ENCODE measurements at regions of chr22 and their contacts with region 1.

Region 1: GRCh38 chr22:37608477-37609239 is at the start of gene GGA1:
- DNase-seq: peak; percentile 99
- ATAC-seq: peak; percentile 75
- H3K4me3 ChIP-seq: peak within 1 kb of the TSS; percentile 65 to 89 (median 77)
- H3K4me3 Mint-ChIP-seq: peak within 1 kb of the TSS; percentile 96
- H3K27ac ChIP-seq: peak within 1 kb of the TSS; percentile 94 to 99
- H3K27ac Mint-ChIP-seq: peak within 1 kb of the TSS; percentile 98
- H3K4me1 ChIP-seq: peaks cover 26 to 36% of the 10 kb centered on the region in 2 donors
- H3K4me1 Mint-ChIP-seq: peaks cover 33% of the 10 kb centered on the region
- H3K27me3 ChIP-seq: peaks cover 0 to 2% (median 0%) of the 10 kb centered on the region in 4 experiments
- H3K27me3 Mint-ChIP-seq: peaks cover 10% of the 10 kb centered on the region
- CTCF ChIP-seq: no peak
- total RNA-seq, gene GGA1: 146 and 154 TPM in 2 replicates

Region 2: DNA sequence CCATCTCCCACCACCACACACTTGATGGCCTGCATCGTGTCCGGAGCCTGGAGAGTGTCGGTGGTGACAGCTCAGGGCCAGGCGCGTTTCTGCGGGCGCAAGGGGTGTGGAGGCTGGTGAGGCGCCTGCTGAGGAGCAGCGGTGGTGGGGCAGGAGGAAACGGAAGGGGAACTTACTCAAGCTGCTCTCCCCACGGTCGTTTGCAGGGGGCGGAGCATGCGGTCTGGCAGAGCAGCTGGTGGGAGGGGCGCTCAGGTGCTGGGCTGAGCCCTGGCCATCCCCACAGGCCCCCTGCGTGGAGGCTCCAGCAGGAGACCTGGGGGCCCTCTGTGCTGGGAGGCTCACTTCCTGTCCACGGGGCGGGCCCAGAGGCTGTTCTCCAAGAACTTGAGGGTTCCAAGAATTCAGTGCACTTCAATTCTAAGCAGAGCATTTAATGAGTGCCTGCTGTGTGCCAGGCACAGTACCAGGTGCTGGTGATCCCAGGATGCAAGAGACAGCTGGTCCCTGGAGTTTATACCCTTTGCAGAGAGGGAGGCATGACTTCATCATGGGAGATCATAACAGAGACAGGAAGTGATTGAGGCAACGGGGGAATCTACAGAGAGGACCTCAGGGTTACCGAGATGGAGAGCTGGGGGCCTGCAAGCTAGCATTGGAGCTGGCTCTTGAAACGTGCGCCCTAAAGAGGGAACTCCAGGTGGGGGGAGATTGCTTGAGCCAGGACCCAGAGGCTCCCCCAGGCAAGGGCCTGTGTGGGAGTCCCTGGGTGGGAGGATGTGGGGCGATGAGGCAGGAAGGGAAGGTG is 364.3 kb before region 1 on chr22 and contains the start of gene RAC2:
- CTCF ChIA-PET with region 1: no interaction called
- POLR2A ChIA-PET with region 1: no interaction called
- intact Hi-C with region 1: loop called (anchors 2 kb)
- DNase-seq: peak; percentile 94
- ATAC-seq: peak; percentile 65
- H3K4me3 ChIP-seq: peak within 1 kb of the TSS; percentile 88 to 99 (median 97)
- H3K4me3 Mint-ChIP-seq: peak within 1 kb of the TSS; percentile 97
- H3K27ac ChIP-seq: peak within 1 kb of the TSS; percentile 80 to 86
- H3K27ac Mint-ChIP-seq: peak within 1 kb of the TSS; percentile 89
- H3K4me1 ChIP-seq: peaks cover 50 to 68% of the 10 kb centered on the region in 2 donors
- H3K4me1 Mint-ChIP-seq: peaks cover 77% of the 10 kb centered on the region
- H3K27me3 ChIP-seq: no peaks in the 10 kb centered on the region
- H3K27me3 Mint-ChIP-seq: no peaks in the 10 kb centered on the region
- CTCF ChIP-seq: no peak
- total RNA-seq, gene RAC2: 249 and 273 TPM in 2 replicates

Region 3: GRCh38 chr22:37566903-37567820 is 41.5 kb before region 1 on chr22:
- CTCF ChIA-PET with region 1: interaction called, 13 read pairs
- POLR2A ChIA-PET with region 1: interaction called, 4 read pairs
- intact Hi-C with region 1: no loop called
- DNase-seq: peak; percentile 91
- ATAC-seq: peak; percentile 93
- H3K4me3 ChIP-seq: peak overlapping the region in 2 of 5 experiments; percentile 4 to 40
- H3K4me3 Mint-ChIP-seq: peak overlapping the region; percentile 74
- H3K27ac ChIP-seq: peak overlapping the region; percentile 25 to 44
- H3K27ac Mint-ChIP-seq: peak overlapping the region; percentile 68
- H3K4me1 ChIP-seq: peaks cover 22 to 27% of the 10 kb centered on the region in 2 donors
- H3K4me1 Mint-ChIP-seq: peaks cover 22% of the 10 kb centered on the region
- H3K27me3 ChIP-seq: peaks cover 0 to 22% (median 8%) of the 10 kb centered on the region in 4 experiments
- H3K27me3 Mint-ChIP-seq: peaks cover 30% of the 10 kb centered on the region
- CTCF ChIP-seq: peak; percentile 95

Region 4: DNA sequence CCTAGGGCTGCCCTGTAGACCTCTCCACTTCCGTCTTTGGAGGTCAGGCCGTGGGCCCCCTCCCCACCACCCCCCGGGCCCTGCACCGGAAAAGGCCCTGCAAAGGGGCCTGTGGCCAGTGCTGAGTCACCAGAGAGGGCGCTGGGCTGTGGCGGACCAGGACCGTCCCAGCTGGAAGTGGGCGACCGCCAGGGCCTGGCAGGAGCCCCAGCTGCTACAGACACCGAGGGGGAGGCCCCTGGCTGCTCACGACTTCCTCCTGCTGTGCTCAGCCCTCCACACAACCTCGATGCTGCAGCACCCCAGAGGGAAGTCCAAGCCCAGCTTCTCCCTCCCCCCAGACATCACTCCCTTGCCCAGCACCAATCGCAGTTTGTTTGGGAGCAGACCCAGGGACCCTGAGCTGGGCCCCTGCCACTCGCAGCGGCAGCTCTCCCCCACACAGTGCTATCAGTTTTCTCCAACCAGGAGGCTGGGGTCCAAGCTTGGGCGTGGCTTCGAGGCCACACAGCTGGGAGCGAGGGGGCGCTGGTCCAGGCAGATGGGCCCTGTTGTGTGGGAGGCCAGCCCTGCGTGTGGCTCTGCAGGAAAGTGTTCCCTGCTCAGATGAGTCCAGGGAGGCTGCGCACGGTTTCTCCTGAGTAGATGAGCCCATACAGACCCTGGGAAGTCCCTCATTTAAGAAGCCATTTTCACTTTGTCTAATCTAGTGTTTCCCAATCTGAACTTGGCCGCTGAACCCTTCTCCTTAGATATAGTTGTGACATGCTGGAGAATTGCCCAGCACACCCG is 25.2 kb after region 1 on chr22:
- CTCF ChIA-PET with region 1: interaction called, 620 read pairs
- POLR2A ChIA-PET with region 1: interaction called, 43 read pairs
- intact Hi-C with region 1: loop called (anchors 2 kb)
- DNase-seq: peak; percentile 88
- ATAC-seq: peak; percentile 76
- H3K4me3 ChIP-seq: peak overlapping the region in 4 of 5 experiments; percentile 30 to 56 (median 40)
- H3K4me3 Mint-ChIP-seq: peak overlapping the region; percentile 87
- H3K27ac ChIP-seq: peak overlapping the region; percentile 89 to 94
- H3K27ac Mint-ChIP-seq: peak overlapping the region; percentile 97
- H3K4me1 ChIP-seq: peaks cover 61 to 68% of the 10 kb centered on the region in 2 donors
- H3K4me1 Mint-ChIP-seq: peaks cover 60% of the 10 kb centered on the region
- H3K27me3 ChIP-seq: no peaks in the 10 kb centered on the region
- H3K27me3 Mint-ChIP-seq: no peaks in the 10 kb centered on the region
- CTCF ChIP-seq: peak; percentile 19

Region 5: GRCh38 chr22:37686002-37686982 is 77.6 kb after region 1 on chr22 and contains the start of gene NOL12:
- CTCF ChIA-PET with region 1: interaction called, 67 read pairs
- POLR2A ChIA-PET with region 1: interaction called, 13 read pairs
- intact Hi-C with region 1: loop called (anchors 1 kb)
- DNase-seq: peak; percentile 93
- ATAC-seq: peak; percentile 86
- H3K4me3 ChIP-seq: peak within 1 kb of the TSS; percentile 79 to 98 (median 88)
- H3K4me3 Mint-ChIP-seq: peak within 1 kb of the TSS; percentile 99
- H3K27ac ChIP-seq: peak within 1 kb of the TSS; percentile 70 to 81
- H3K27ac Mint-ChIP-seq: peak within 1 kb of the TSS; percentile 95
- H3K4me1 ChIP-seq: peaks cover 10 to 30% of the 10 kb centered on the region in 2 donors
- H3K4me1 Mint-ChIP-seq: peaks cover 28% of the 10 kb centered on the region
- H3K27me3 ChIP-seq: no peaks in the 10 kb centered on the region
- H3K27me3 Mint-ChIP-seq: no peaks in the 10 kb centered on the region
- CTCF ChIP-seq: no peak
- total RNA-seq, gene NOL12: 34.7 and 38.5 TPM in 2 replicates

Region 6: DNA sequence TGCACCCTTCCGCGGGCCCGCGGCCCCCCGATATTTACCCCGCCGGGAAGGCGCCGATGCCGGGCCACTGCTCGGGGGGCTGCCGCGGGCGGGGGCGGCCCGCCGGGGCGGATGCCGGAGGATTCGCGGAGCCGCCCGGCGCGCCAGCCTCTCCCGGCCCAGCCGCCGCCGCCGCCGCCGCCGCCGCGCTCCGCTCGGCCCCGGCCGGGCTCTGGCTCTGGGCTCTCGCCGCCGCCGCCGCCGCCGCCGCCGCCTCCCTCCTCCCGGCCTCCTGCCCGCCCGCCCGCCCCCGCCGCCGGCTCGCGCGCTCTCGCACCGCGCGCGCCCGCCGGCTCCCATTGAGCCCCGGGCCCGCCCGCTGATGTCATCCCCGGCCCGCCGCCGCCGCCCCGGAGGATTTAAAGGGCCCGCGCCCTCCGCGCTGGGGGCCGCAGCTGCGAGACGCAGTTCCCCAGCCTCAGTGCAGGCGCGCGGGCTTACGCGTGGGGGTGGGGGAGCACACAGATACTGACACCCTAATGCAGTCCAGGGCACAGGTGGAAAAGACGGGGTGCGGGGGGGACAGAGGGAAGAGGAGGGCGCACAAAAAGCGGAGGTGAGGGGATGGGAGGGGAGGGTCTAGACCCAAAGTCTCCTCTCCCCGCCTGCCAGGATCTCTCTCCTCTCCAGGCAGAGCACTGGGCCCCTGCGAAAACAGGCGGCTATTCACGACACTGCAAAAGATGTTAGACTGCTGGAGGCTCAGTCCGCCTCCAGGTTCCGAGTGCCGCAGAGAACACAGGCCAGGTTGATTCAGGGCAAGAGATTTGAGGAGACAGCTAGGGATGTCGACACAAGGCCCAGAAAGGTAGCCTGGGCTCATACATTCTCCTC is 708.7 kb after region 1 on chr22 and contains the start of gene CSNK1E:
- CTCF ChIA-PET with region 1: no interaction called
- POLR2A ChIA-PET with region 1: no interaction called
- intact Hi-C with region 1: loop called (anchors 5 kb)
- DNase-seq: peak; percentile 84
- ATAC-seq: peak; percentile 61
- H3K4me3 ChIP-seq: peak within 1 kb of the TSS; percentile 3 to 71 (median 58)
- H3K4me3 Mint-ChIP-seq: peak within 1 kb of the TSS; percentile 92
- H3K27ac ChIP-seq: peak within 1 kb of the TSS; percentile 82 to 91
- H3K27ac Mint-ChIP-seq: peak within 1 kb of the TSS; percentile 97
- H3K4me1 ChIP-seq: peaks cover 40 to 51% of the 10 kb centered on the region in 2 donors
- H3K4me1 Mint-ChIP-seq: peaks cover 49% of the 10 kb centered on the region
- H3K27me3 ChIP-seq: no peaks in the 10 kb centered on the region
- H3K27me3 Mint-ChIP-seq: no peaks in the 10 kb centered on the region
- CTCF ChIP-seq: no peak
- total RNA-seq, gene CSNK1E: 133 and 136 TPM in 2 replicates